Mammary epithelial cell (primary cell): ENCODE measurements at regions of chr7 and their contacts with region 1.

Region 1: DNA sequence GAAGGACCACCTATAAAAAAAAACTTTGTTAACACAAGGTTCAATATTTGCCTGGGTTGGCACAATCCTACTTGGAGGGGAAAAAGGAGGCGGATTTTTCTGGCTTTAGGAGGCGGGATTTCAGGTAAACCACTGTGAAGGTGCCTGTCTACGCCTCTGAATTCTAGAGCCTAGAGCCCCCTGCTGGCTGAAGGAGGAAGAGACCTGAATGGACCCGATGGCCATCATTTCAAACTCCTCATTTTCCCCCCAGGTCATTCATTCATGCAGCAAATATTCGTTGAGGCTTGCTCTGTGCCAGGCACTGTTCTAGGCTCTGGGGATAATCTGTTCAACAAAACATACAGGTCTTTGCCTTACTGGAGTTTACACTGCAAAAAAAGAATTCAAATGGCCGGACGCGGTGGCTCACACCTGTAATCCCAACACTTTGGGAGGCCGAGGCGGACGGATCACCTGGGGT is 90.3 kb upstream of the NFE2L3 start:
- DNase-seq: peak; percentile 56
- H3K4me3 ChIP-seq: no peak overlapping the region
- H3K27ac ChIP-seq: no peak overlapping the region
- H3K4me1 ChIP-seq: peaks cover 4% of the 10 kb centered on the region
- H3K27me3 ChIP-seq: no peaks in the 10 kb centered on the region
- CTCF ChIP-seq: peak; percentile 85 to 92

Region 2: DNA sequence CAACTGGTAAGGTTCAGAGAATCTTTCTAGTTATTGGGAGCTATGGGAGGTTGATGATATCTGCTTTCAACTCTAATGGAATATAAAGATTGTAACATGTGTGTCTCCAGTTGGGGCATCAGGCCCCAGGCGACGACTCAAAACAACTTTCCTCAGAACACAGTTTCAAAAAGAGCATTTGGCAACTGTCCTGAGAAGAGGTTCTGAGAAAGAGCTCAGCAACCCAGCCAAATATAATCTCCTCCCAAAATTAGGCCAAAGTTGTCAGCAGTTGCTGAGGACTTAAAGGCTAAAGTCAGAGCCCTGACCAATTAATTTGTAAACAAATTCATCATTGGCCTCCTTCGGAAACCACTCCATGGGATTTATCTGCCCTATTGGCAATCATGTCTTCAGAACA is 160.8 kb before region 1 on chr7:
- CTCF ChIA-PET with region 1: no interaction called
- dilution Hi-C with region 1: no loop called
- in situ Hi-C with region 1: no loop called
- intact Hi-C with region 1: no loop called
- DNase-seq: no peak
- H3K4me3 ChIP-seq: no peak overlapping the region
- H3K27ac ChIP-seq: no peak overlapping the region
- H3K4me1 ChIP-seq: no peaks in the 10 kb centered on the region
- H3K27me3 ChIP-seq: no peaks in the 10 kb centered on the region
- CTCF ChIP-seq: no peak

Region 3: DNA sequence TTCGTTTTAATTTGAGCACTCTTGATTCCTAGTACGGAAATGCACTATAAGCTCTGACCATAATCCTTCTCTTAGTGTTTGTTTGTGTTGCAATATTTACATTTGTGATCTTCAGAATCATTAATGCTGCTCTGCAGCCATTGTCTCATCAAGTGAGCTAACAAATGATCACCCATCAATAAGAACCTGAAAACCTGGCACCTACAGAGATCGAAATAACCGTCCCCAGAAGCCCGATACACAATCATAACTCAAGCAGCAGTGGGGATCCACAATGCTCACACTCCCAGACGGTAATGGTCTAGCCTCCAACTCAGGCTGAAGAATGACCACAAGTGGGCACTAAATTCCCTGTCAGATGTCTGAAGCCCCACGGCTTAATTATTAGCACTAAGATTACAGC is 65.7 kb before region 1 on chr7:
- CTCF ChIA-PET with region 1: no interaction called
- dilution Hi-C with region 1: no loop called
- in situ Hi-C with region 1: no loop called
- intact Hi-C with region 1: loop called (anchors 2 kb)
- DNase-seq: no peak
- H3K4me3 ChIP-seq: no peak overlapping the region
- H3K27ac ChIP-seq: no peak overlapping the region
- H3K4me1 ChIP-seq: no peaks in the 10 kb centered on the region
- H3K27me3 ChIP-seq: peaks cover 3% of the 10 kb centered on the region
- CTCF ChIP-seq: peak in 1 of 2 donors; percentile 7